T-cell (primary cell): ENCODE measurements at regions of chr16 and their contacts with region 1.

Region 1: DNA sequence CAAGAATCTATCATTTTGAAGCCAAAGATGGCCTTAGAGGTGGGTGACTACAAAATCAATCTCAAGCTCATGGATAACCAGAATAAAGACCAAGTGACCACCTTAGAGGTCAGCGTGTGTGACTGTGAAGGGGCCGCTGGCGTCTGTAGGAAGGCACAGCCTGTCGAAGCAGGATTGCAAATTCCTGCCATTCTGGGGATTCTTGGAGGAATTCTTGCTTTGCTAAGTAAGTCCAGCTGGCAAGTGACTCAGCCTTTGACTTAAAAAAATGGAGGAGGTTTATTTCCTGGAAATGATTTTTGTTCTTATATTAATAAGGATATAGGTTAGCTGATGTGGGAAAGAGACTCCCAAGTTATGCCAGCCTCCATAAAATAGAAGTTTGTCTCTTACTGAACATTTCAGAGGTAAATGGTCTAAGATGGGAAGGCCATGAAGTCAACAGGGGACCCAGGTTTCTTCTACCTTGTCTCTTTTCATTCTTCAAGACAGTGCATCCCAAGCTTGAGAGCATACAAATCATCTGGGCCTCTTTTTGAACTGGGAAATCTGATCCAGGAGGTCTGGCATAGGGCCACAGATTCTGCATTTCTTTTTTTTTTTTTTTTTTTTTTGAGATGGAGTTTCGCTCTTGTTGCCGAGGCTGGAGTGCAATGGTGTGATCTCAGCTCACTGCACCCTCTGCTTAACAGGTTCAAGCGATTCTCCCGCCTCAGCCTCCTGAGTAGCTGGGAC is 19.8 kb upstream of the TANGO6 start:
- DNase-seq: no peak
- ATAC-seq: no peak
- H3K4me3 ChIP-seq: no peak overlapping the region
- H3K4me3 Mint-ChIP-seq: no peak overlapping the region
- H3K27ac ChIP-seq: no peak overlapping the region
- H3K27ac Mint-ChIP-seq: no peak overlapping the region
- H3K4me1 ChIP-seq: no peaks in the 10 kb centered on the region
- H3K4me1 Mint-ChIP-seq: no peaks in the 10 kb centered on the region
- H3K27me3 ChIP-seq: peaks cover 0 to 2% of the 10 kb centered on the region in 2 experiments
- H3K27me3 Mint-ChIP-seq: no peaks in the 10 kb centered on the region

Region 2: DNA sequence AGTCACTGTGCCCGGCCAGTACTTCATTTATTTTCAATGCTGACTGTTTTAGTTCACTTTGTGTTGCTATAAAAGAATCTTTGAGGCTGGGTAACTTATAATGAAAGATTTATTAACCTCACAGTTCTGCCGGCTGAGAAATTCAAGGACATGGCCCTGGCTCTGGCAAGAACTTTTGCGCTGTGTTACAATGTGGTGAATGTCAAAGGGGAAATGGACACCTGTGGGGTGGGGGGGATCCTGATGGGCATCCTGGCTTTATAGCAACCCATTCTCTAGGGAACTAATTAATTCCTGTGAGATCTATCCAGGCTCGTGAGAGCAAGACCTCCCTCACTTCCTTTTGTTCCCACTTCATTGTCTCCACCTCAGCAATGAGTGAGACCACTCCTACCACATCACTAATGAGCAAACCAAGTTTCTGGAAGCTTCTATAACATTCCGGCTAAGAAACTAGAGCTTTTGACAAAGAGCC is 195.6 kb before region 1 on chr16:
- CTCF ChIA-PET with region 1: no interaction called
- POLR2A ChIA-PET with region 1: no interaction called
- DNase-seq: no peak
- ATAC-seq: no peak
- H3K4me3 ChIP-seq: no peak overlapping the region
- H3K4me3 Mint-ChIP-seq: no peak overlapping the region
- H3K27ac ChIP-seq: no peak overlapping the region
- H3K27ac Mint-ChIP-seq: no peak overlapping the region
- H3K4me1 ChIP-seq: no peaks in the 10 kb centered on the region
- H3K4me1 Mint-ChIP-seq: no peaks in the 10 kb centered on the region
- H3K27me3 ChIP-seq: peaks cover 0 to 14% of the 10 kb centered on the region in 2 experiments
- H3K27me3 Mint-ChIP-seq: peaks cover 0 to 7% of the 10 kb centered on the region in 2 donors

Region 3: DNA sequence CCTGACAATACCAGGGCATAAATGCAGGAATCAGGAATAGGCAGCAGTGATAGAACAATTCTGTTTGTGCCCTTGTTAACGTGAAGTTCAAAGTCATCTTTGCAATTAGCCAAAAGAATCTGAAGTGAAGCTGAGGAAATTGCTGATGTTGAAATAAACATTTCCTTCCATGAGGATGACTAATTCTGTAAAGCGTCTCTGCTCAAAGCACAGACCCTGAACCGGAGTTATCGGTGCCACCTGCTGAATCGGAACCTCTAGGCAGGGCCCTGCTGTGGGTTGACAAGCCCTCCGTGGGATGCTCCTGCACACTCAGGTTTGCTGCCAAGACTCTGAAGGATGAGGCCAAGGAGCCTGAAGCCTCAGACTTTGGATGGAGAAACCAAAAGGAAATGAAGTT is 123.4 kb before region 1 on chr16:
- CTCF ChIA-PET with region 1: interaction called in 1 of 2 experiments, 12 read pairs
- POLR2A ChIA-PET with region 1: no interaction called
- DNase-seq: no peak
- ATAC-seq: no peak
- H3K4me3 ChIP-seq: no peak overlapping the region
- H3K4me3 Mint-ChIP-seq: no peak overlapping the region
- H3K27ac ChIP-seq: no peak overlapping the region
- H3K27ac Mint-ChIP-seq: no peak overlapping the region
- H3K4me1 ChIP-seq: peaks cover 0 to 4% of the 10 kb centered on the region in 2 experiments
- H3K4me1 Mint-ChIP-seq: peaks cover 0 to 5% (median 0%) of the 10 kb centered on the region in 3 donors
- H3K27me3 ChIP-seq: peaks cover 0 to 17% of the 10 kb centered on the region in 2 experiments
- H3K27me3 Mint-ChIP-seq: no peaks in the 10 kb centered on the region

Region 4: DNA sequence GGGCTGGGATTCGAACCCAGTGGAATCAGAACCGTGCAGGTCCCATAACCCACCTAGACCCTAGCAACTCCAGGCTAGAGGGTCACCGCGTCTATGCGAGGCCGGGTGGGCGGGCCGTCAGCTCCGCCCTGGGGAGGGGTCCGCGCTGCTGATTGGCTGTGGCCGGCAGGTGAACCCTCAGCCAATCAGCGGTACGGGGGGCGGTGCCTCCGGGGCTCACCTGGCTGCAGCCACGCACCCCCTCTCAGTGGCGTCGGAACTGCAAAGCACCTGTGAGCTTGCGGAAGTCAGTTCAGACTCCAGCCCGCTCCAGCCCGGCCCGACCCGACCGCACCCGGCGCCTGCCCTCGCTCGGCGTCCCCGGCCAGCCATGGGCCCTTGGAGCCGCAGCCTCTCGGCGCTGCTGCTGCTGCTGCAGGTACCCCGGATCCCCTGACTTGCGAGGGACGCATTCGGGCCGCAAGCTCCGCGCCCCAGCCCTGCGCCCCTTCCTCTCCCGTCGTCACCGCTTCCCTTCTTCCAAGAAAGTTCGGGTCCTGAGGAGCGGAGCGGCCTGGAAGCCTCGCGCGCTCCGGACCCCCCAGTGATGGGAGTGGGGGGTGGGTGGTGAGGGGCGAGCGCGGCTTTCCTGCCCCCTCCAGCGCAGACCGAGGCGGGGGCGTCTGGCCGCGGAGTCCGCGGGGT is 86.4 kb before region 1 on chr16 and contains the start of gene CDH1:
- CTCF ChIA-PET with region 1: no interaction called
- POLR2A ChIA-PET with region 1: no interaction called
- DNase-seq: peak in 32 of 35 experiments; percentile 1 to 37 (median 18)
- ATAC-seq: peak; percentile 67 to 79 (median 74)
- H3K4me3 ChIP-seq: peak within 1 kb of the TSS in 1 of 2 donors; percentile 47
- H3K4me3 Mint-ChIP-seq: peak within 1 kb of the TSS; percentile 52 to 66 (median 59)
- H3K27ac ChIP-seq: no peak within 1 kb of the TSS
- H3K27ac Mint-ChIP-seq: no peak within 1 kb of the TSS
- H3K4me1 ChIP-seq: peaks cover 2 to 15% of the 10 kb centered on the region in 2 experiments
- H3K4me1 Mint-ChIP-seq: peaks cover 0 to 9% (median 5%) of the 10 kb centered on the region in 3 donors
- H3K27me3 ChIP-seq: peaks cover 0 to 47% of the 10 kb centered on the region in 2 experiments
- H3K27me3 Mint-ChIP-seq: peaks cover 29 to 44% of the 10 kb centered on the region in 2 donors
- total RNA-seq, gene CDH1: 0.38 to 6.8 (median 1.4) TPM

Region 5: GRCh38 chr16:68811503-68811902 is 12.1 kb before region 1 on chr16:
- CTCF ChIA-PET with region 1: no interaction called
- POLR2A ChIA-PET with region 1: interaction called in 1 of 2 experiments, 10 read pairs
- DNase-seq: no peak
- ATAC-seq: no peak
- H3K4me3 ChIP-seq: no peak overlapping the region
- H3K4me3 Mint-ChIP-seq: no peak overlapping the region
- H3K27ac ChIP-seq: no peak overlapping the region
- H3K27ac Mint-ChIP-seq: no peak overlapping the region
- H3K4me1 ChIP-seq: no peaks in the 10 kb centered on the region
- H3K4me1 Mint-ChIP-seq: no peaks in the 10 kb centered on the region
- H3K27me3 ChIP-seq: no peaks in the 10 kb centered on the region
- H3K27me3 Mint-ChIP-seq: peaks cover 0 to 6% of the 10 kb centered on the region in 2 donors

Region 6: GRCh38 chr16:68843482-68844210 is 20.1 kb after region 1 on chr16 and contains the start of gene TANGO6:
- CTCF ChIA-PET with region 1: no interaction called
- POLR2A ChIA-PET with region 1: interaction called in 1 of 2 experiments, 12 read pairs
- DNase-seq: peak; percentile 78 to 93 (median 86)
- ATAC-seq: peak; percentile 94 to 97 (median 95)
- H3K4me3 ChIP-seq: peak within 1 kb of the TSS; percentile 89 to 94
- H3K4me3 Mint-ChIP-seq: peak within 1 kb of the TSS; percentile 81 to 94 (median 89)
- H3K27ac ChIP-seq: peak within 1 kb of the TSS; percentile 64
- H3K27ac Mint-ChIP-seq: peak within 1 kb of the TSS; percentile 67 to 90
- H3K4me1 ChIP-seq: peaks cover 10 to 18% of the 10 kb centered on the region in 2 experiments
- H3K4me1 Mint-ChIP-seq: peaks cover 32 to 38% (median 36%) of the 10 kb centered on the region in 3 donors
- H3K27me3 ChIP-seq: peaks cover 0 to 5% of the 10 kb centered on the region in 2 experiments
- H3K27me3 Mint-ChIP-seq: no peaks in the 10 kb centered on the region
- total RNA-seq, gene TANGO6: 25.2 to 35.2 (median 29.0) TPM